HEK293 (cell line): ENCODE measurements at regions of chr1 and their contacts with region 1.

Region 1: DNA sequence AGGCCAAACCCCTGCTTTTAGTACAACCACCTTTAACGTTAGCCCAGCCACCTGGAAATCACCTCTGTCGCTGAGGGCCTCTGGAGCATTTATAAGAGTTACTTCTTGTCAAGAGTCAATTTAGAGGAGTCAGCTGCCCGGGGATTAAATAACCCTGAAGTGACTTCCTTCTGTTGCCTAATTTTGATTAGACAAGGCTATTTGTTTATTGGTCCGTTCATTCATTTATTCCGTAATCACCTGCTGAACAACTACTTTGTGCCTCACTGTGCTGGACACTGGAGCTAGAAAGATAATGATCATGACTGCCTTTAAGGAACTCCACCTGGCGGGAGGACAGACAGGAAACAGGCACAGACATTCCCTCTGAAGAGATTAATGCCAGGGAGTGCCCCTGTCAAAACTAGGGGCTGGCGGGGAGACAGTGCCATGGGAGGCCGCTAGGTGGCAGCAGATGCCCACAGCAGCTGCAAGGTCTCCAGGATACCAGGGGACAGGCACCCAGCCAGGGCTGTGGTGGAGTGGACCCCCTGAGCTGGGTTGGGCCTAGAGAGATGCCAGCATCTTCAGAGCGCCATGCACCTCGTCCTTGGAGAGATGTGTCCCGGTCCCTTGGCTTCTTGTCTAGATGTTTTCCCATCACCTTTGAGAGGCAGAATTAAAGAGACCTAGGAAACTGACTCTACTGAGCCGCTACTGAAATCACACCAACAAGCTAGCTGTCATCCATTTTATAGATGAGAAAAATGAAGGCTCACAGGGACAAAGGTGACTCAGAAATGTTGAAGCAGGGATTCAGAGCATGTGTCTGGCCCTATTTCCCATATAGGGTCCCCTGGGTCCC is 3.7 kb downstream of the REN start:
- H3K4me3 ChIP-seq: no peak overlapping the region
- H3K27ac ChIP-seq: no peak overlapping the region
- H3K4me1 ChIP-seq: no peaks in the 10 kb centered on the region
- CTCF ChIP-seq: peak; percentile 95

Region 2: GRCh38 chr1:203898458-203899244 is 263.8 kb before region 1 on chr1:
- CTCF ChIA-PET with region 1: no interaction called
- POLR2A ChIA-PET with region 1: no interaction called
- H3K4me3 ChIP-seq: no peak overlapping the region
- H3K27ac ChIP-seq: no peak overlapping the region
- H3K4me1 ChIP-seq: no peaks in the 10 kb centered on the region
- CTCF ChIP-seq: no peak

Region 3: GRCh38 chr1:204115116-204115515 is 47.3 kb before region 1 on chr1:
- CTCF ChIA-PET with region 1: no interaction called
- POLR2A ChIA-PET with region 1: no interaction called
- H3K4me3 ChIP-seq: no peak overlapping the region
- H3K27ac ChIP-seq: no peak overlapping the region
- H3K4me1 ChIP-seq: no peaks in the 10 kb centered on the region
- CTCF ChIP-seq: no peak

Region 4: GRCh38 chr1:204190212-204191211 is 28.1 kb after region 1 on chr1:
- CTCF ChIA-PET with region 1: interaction called, 11 read pairs
- POLR2A ChIA-PET with region 1: no interaction called
- H3K4me3 ChIP-seq: no peak overlapping the region
- H3K27ac ChIP-seq: no peak overlapping the region
- H3K4me1 ChIP-seq: no peaks in the 10 kb centered on the region
- CTCF ChIP-seq: no peak

Region 5: GRCh38 chr1:204198151-204198994 is 35.9 kb after region 1 on chr1:
- CTCF ChIA-PET with region 1: interaction called, 18 read pairs
- POLR2A ChIA-PET with region 1: no interaction called
- H3K4me3 ChIP-seq: no peak overlapping the region
- H3K27ac ChIP-seq: no peak overlapping the region
- H3K4me1 ChIP-seq: no peaks in the 10 kb centered on the region
- CTCF ChIP-seq: no peak

Region 6: DNA sequence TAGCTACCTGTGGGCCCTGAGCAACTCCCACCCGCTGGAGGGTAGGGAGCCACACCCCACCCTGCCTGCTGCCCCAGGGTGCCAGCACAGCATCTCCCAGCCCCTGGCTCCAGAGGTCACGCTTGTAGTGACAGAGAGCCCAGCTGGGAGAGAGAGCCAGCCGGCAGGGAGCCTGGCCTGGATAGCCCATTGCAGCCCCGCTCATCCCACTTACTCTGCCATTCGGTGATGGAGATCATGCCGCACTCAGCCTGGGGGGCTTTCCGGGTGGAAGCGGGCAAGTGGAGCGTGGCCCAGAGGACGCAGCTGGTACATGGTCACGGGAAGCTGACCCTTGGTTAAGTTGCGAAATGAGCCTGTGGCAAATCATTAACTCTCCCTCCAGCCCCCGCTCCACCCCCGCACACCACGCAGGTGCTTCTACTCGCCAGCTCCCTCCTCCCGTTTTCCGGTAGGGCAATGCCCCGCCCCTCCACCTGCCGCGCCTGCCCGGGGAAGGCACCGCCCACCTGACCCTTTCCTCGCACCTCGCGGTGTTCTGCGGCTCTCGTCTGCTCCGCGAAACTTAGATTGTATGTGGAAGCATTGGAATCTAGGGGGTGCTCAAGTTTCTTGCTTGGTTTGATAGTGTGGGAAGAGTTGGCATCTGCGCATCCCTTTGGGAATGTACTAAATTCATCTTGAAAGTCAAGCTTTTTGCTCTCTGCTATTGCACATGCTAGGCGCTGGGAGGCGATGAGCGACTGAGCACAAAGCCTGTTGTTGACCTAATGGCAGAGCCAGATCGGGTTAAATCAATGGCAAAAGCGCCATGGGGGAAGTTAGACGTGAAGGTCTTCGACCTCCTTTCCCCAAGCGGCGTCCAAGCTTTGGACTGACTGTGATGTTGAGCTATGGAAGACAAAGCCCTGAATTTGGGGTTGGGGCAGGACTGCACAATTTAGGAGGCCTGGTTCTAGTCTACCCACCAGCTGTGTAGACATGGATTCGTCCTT is 51.5 kb after region 1 on chr1 and contains the start of gene GOLT1A:
- CTCF ChIA-PET with region 1: interaction called, 37 read pairs
- POLR2A ChIA-PET with region 1: no interaction called
- H3K4me3 ChIP-seq: peak within 1 kb of the TSS; percentile 36
- H3K27ac ChIP-seq: no peak within 1 kb of the TSS
- H3K4me1 ChIP-seq: no peaks in the 10 kb centered on the region
- CTCF ChIP-seq: no peak

Region 7: DNA sequence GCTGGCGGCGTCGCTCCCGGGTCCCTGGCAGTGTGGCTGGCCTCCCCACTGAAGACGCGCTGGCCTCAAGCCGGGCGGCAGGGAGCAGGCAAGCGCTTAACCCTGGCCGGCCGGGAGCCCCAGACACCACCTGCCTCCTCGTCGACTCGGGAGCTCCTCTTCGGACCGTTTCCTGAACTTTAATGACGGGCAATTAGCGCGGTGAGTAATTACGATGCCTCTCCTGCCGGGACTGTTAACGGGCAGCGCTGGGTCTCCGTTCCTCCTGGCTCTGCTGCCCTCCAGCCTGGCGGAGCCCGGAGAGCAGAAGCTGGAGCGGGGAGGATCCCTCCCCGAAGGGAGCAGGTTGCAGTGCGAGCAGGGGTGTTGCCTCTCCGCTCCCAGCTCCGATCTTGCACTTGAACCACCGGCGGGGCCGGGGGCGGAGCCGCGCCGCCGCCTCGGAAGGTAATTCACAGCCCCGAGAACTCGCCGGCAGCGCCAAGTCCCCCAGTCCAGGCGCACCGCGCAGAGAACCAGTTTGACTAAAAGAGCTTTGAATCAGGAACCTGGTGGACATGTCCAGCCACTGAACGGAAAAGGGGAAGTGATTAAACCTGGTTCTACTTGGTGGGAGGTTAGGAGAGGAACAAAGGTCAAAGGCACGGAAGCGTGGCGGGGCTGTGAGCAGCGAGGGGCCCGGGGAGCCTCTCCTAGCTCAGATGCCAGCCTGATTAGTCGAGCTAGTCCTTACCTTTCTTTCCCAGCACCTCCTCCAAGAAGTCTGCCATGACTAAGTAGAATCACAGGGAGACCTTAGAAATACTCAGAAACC is 215.5 kb after region 1 on chr1:
- CTCF ChIA-PET with region 1: interaction called, 16 read pairs
- POLR2A ChIA-PET with region 1: interaction called, 4 read pairs
- H3K4me3 ChIP-seq: peak overlapping the region; percentile 26
- H3K27ac ChIP-seq: no peak overlapping the region; the same call in 1 of the 2 replicates
- H3K4me1 ChIP-seq: no peaks in the 10 kb centered on the region
- CTCF ChIP-seq: no peak